CD14-positive monocyte (primary cell): ENCODE measurements at regions of chr1 and their contacts with region 1.

Region 1: DNA sequence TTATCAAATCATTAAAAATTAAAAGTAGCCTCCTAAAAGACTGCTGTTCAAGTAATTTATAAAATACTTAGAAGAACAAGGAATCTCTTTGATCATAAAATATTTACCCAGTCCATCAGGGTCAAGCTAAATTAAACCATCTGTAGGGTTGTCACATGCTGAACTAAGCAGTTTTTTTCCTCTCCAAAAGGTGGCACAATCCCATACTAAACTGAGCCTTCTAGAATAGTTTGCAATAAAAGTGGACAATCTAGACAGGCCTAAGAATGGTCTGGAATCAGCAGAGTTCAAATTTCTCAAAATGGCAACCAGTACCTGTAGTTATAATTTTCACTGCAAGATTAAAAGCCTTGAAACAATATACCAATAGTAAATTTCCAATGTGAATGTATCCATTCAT is 194.8 kb downstream of the EIF4G3 start:
- DNase-seq: no peak
- H3K4me3 ChIP-seq: no peak overlapping the region
- H3K4me3 Mint-ChIP-seq: no peak overlapping the region
- H3K27ac ChIP-seq: no peak overlapping the region
- H3K27ac Mint-ChIP-seq: no peak overlapping the region
- H3K4me1 ChIP-seq: no peaks in the 10 kb centered on the region
- H3K4me1 Mint-ChIP-seq: no peaks in the 10 kb centered on the region
- H3K27me3 ChIP-seq: no peaks in the 10 kb centered on the region
- H3K27me3 Mint-ChIP-seq: no peaks in the 10 kb centered on the region
- CTCF ChIP-seq: no peak

Region 2: DNA sequence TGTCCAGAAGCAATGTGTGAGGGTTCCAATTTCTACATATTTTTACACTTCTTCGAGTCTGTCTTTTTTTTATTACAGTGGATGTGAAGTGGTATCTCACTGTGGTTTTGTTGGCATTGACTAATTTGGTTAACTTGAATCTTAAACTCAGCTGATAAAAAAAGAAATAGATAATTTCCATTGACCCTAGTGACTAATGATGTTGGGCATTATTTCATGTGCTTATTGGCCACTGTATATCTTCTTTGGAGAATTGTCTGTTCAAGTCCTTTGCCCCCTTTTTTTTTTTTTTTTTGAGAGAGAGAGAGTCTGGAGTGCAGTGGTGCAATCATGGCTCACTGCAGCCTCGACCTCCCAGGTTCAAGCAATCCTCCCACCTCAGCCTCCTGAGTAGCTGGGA is 424.7 kb after region 1 on chr1:
- intact Hi-C with region 1: loop called in 1 of 2 experiments (anchors 10 kb)
- DNase-seq: no peak
- H3K4me3 ChIP-seq: no peak overlapping the region
- H3K4me3 Mint-ChIP-seq: peak overlapping the region in 1 of 2 donors; percentile 8
- H3K27ac ChIP-seq: no peak overlapping the region
- H3K27ac Mint-ChIP-seq: no peak overlapping the region
- H3K4me1 ChIP-seq: no peaks in the 10 kb centered on the region
- H3K4me1 Mint-ChIP-seq: no peaks in the 10 kb centered on the region
- H3K27me3 ChIP-seq: peaks cover 0 to 13% of the 10 kb centered on the region in 2 donors
- H3K27me3 Mint-ChIP-seq: peaks cover 12 to 48% (median 22%) of the 10 kb centered on the region in 3 donors
- CTCF ChIP-seq: no peak